Right cardiac atrium (tissue), 5 donors: ENCODE measurements at regions of chr13 and their contacts with region 1.

Region 1: GRCh38 chr13:53151336-53152056 is 122.9 kb downstream of the OLFM4 start:
- DNase-seq: no peak
- ATAC-seq: peak in 1 of 2 donors; percentile 26
- H3K4me3 ChIP-seq: no peak overlapping the region
- H3K27ac ChIP-seq: no peak overlapping the region
- H3K4me1 ChIP-seq: no peaks in the 10 kb centered on the region
- H3K27me3 ChIP-seq: no peaks in the 10 kb centered on the region

Region 2: DNA sequence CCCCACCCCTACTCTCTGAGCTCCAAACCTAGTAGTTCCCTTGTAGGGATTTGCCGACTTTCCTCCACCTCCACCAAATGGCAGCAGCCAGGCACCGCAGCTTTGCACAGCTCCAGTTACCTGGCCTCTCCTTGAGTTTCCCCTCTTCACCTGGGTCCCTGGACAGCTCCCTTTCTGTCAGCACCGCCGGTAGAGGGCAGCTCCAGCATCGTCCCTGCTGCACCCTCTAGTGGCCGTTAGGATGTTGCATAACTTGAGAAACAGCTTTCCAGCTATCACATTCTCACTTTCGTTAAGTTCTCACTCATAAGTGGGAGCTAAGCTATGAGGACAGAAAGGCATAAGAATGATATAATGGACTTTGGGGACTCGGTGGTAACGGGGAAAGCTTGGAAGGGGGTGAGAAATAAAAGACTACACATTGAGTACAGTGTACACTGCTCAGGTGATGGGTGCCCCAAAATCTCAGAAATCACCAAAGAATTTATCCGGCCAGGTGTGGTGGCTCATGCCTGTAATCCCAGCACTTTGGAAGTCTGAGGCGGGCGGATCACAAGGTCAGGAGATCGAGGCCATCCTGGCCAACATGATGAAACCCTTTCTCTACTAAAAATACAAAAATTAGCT is 183.3 kb before region 1 on chr13:
- intact Hi-C with region 1: loop called in 1 of 4 experiments (anchors 5 kb)
- DNase-seq: peak; percentile 64 to 88 (median 80)
- ATAC-seq: peak; percentile 80 to 86
- H3K4me3 ChIP-seq: no peak overlapping the region
- H3K27ac ChIP-seq: no peak overlapping the region
- H3K4me1 ChIP-seq: no peaks in the 10 kb centered on the region
- H3K27me3 ChIP-seq: no peaks in the 10 kb centered on the region

Region 3: GRCh38 chr13:53648673-53649072 is 497.2 kb after region 1 on chr13:
- intact Hi-C with region 1: no loop called
- DNase-seq: no peak
- ATAC-seq: no peak
- H3K4me3 ChIP-seq: no peak overlapping the region
- H3K27ac ChIP-seq: no peak overlapping the region
- H3K4me1 ChIP-seq: no peaks in the 10 kb centered on the region
- H3K27me3 ChIP-seq: no peaks in the 10 kb centered on the region